ENCODE measurements at regions of chr2 and their contacts with region 1.

Region 1: GRCh38 chr2:230987137-230988020 is 8.5 kb upstream of the SPATA3 start:
- DNase-seq: peak; percentile 70
- H3K4me3 ChIP-seq: peak overlapping the region; percentile 47
- H3K27ac ChIP-seq: no peak overlapping the region
- H3K4me1 ChIP-seq: no peaks in the 10 kb centered on the region
- H3K27me3 ChIP-seq: no peaks in the 10 kb centered on the region
- CTCF ChIP-seq: peak; percentile 96

Region 2: GRCh38 chr2:230525682-230526081 is 461.7 kb before region 1 on chr2:
- CTCF ChIA-PET with region 1: interaction called, 11 read pairs
- POLR2A ChIA-PET with region 1: no interaction called
- intact Hi-C with region 1: no loop called
- DNase-seq: no peak
- H3K4me3 ChIP-seq: no peak overlapping the region
- H3K27ac ChIP-seq: no peak overlapping the region
- H3K4me1 ChIP-seq: no peaks in the 10 kb centered on the region
- H3K27me3 ChIP-seq: no peaks in the 10 kb centered on the region
- CTCF ChIP-seq: no peak

Region 3: DNA sequence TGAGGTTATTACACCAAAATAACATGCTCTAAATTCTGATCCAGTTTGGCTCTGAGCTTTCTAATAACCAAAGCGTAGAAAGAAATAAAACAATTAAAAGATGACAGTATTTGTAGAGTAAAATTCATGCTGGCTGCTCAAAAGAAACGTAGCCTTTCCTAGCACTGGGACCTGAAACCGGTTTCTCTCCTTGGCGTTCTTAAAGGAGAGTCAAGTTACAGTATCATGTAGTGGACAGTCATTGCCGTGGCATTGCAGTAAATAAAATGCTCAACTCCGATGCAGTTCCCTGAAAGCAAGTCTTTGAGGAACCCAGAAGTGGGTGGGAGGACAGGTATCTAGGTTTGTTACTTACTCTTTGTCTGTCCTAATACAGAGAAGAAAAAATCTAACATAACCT is 175.3 kb before region 1 on chr2:
- CTCF ChIA-PET with region 1: no interaction called
- POLR2A ChIA-PET with region 1: no interaction called
- intact Hi-C with region 1: no loop called
- DNase-seq: no peak
- H3K4me3 ChIP-seq: no peak overlapping the region
- H3K27ac ChIP-seq: no peak overlapping the region
- H3K4me1 ChIP-seq: no peaks in the 10 kb centered on the region
- H3K27me3 ChIP-seq: no peaks in the 10 kb centered on the region
- CTCF ChIP-seq: no peak

Region 4: DNA sequence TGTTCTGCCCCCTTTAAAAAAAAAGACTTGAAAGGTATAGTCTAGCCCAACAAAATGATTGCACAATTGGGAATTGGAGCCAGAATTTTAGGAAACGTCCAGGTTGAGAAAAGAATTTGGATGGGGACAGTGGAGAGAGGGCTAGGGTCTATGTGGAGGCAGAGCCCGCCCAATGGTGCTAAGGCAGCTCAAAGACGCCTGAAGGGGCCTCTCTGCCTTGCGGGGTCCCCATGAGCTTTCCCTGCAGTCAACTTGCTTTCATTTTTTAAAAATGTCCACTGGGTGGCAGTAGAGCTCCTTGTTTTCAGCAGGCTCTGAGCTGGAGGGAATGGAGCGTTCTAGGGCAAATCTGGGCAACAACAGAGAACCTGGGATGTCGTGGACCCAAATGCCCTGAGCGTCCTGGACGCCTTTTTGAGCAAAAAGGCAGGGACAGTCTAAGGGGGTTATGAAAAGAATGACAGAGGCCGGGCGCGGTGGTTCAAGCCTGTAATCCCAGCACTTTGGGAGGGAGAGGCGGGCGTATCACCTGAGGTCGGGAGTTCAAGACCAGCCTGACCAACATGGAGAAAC is 162.9 kb before region 1 on chr2:
- CTCF ChIA-PET with region 1: interaction called, 37 read pairs
- POLR2A ChIA-PET with region 1: no interaction called
- intact Hi-C with region 1: loop called (anchors 1 kb)
- DNase-seq: peak; percentile 91
- H3K4me3 ChIP-seq: no peak overlapping the region
- H3K27ac ChIP-seq: no peak overlapping the region
- H3K4me1 ChIP-seq: no peaks in the 10 kb centered on the region
- H3K27me3 ChIP-seq: no peaks in the 10 kb centered on the region
- CTCF ChIP-seq: peak; percentile 74

Region 5: GRCh38 chr2:230847883-230848388 is 139.4 kb before region 1 on chr2:
- CTCF ChIA-PET with region 1: interaction called, 11 read pairs
- POLR2A ChIA-PET with region 1: no interaction called
- intact Hi-C with region 1: loop called (anchors 1 kb)
- DNase-seq: peak; percentile 89
- H3K4me3 ChIP-seq: no peak overlapping the region
- H3K27ac ChIP-seq: no peak overlapping the region
- H3K4me1 ChIP-seq: no peaks in the 10 kb centered on the region
- H3K27me3 ChIP-seq: no peaks in the 10 kb centered on the region
- CTCF ChIP-seq: peak; percentile 93

Region 6: DNA sequence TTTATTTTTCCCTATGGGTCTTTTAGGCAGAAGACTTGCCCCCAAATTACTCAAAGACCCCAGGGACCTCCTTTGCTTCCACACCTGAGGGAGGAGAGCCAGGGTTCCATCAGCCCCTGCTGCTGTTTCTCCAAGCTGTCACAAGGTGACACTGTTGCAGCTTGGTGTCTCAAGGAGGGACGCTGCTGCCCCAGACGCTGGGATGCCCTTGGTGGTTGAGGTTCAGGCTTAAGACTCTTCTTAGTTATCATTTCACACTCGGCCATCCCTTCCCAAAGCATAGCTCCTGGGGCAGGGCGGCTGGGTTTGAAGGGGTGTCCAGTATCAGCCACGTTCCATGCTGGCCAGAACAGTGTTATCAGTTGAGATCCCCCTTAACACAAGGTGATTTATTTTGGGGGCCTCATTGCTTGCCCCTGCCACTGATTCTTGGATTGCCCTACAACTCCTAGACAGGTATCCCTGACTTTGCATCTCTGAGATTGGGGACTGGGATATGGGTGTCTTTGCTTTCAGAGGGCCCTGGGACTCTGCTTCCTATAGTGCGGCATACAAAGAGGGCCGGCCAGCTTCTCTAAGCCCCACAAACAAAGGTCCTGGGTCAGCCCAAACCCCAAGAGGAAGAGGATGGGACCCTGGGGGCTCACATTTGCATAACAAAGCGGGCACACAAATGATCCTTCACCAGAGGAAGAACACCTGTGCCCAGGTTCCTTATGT is 85.0 kb before region 1 on chr2:
- CTCF ChIA-PET with region 1: interaction called, 15 read pairs
- POLR2A ChIA-PET with region 1: interaction called, 4 read pairs
- intact Hi-C with region 1: loop called (anchors 1 kb)
- DNase-seq: peak; percentile 70
- H3K4me3 ChIP-seq: no peak overlapping the region
- H3K27ac ChIP-seq: no peak overlapping the region
- H3K4me1 ChIP-seq: no peaks in the 10 kb centered on the region
- H3K27me3 ChIP-seq: no peaks in the 10 kb centered on the region
- CTCF ChIP-seq: peak; percentile 87

Region 7: DNA sequence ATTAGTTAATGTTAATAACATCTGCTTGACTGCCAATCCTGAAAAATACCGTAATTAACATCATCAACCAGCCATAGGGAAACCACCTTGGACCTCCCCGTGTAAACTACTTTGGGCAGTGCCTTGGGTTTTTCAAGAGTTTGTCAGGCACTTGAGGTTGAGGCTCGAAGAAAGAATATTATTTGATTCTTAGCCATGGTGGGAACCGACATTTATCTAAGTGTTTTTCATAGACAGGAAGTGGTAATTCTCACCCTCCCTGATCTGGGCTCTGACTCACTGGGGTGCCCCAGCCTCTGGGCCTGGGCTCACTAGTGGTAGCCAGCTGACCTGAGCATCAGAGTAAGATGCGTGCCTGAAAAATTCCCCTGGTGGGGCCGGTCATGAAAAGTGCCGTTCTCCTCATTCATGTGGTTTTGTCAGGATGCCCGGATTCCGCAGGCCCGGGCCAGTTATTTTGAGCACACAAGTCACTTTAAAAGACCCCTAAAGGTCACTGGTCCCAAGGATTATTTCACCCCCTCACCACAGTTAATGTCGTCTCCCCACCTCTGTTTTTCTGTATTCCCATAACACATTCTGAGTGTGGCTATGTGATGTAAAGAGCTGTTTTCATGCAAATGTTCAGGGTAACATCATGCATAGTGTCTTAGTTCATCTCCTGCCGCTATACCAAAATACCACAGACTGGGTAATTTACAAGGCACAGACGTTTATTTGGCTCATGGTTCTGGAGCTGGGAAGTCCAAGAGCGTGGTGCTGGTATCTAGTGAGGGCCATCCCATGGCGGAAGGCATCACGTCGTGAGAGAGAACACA is 13.1 kb before region 1 on chr2:
- CTCF ChIA-PET with region 1: no interaction called
- POLR2A ChIA-PET with region 1: no interaction called
- intact Hi-C with region 1: no loop called
- DNase-seq: no peak
- H3K4me3 ChIP-seq: no peak overlapping the region
- H3K27ac ChIP-seq: no peak overlapping the region
- H3K4me1 ChIP-seq: no peaks in the 10 kb centered on the region
- H3K27me3 ChIP-seq: no peaks in the 10 kb centered on the region
- CTCF ChIP-seq: no peak

Region 8: GRCh38 chr2:232327105-232328041 is 1340.0 kb after region 1 on chr2:
- CTCF ChIA-PET with region 1: no interaction called
- POLR2A ChIA-PET with region 1: no interaction called
- intact Hi-C with region 1: no loop called
- DNase-seq: peak; percentile 66
- H3K4me3 ChIP-seq: no peak overlapping the region
- H3K27ac ChIP-seq: no peak overlapping the region
- H3K4me1 ChIP-seq: no peaks in the 10 kb centered on the region
- H3K27me3 ChIP-seq: no peaks in the 10 kb centered on the region
- CTCF ChIP-seq: peak; percentile 76